OCI-LY7 (cell line): ENCODE measurements at regions of chr5 and their contacts with region 1.

Region 1: DNA sequence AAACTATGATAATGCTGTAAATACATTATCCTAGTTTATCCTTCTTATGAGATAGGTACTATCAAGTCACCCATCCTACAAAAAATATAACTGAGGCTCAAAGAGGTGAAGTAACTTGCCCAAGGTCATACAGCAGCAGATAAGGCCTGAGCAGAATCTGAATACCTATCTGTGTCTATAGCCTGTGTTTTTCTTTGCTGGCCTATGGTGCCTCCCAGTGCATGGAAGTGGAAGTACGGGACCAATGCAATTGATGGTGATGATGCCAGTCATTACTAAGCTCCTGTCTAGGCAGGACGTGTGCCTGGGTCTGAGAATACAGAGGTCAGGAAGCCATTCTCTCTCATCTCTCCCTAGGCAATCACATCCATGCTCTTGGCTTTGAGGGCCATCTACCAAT is 67.8 kb downstream of the FAT2 start:
- DNase-seq: peak; percentile 45
- H3K4me3 ChIP-seq: no peak overlapping the region
- H3K27ac ChIP-seq: no peak overlapping the region
- H3K4me1 ChIP-seq: no peaks in the 10 kb centered on the region
- CTCF ChIP-seq: peak; percentile 79

Region 2: DNA sequence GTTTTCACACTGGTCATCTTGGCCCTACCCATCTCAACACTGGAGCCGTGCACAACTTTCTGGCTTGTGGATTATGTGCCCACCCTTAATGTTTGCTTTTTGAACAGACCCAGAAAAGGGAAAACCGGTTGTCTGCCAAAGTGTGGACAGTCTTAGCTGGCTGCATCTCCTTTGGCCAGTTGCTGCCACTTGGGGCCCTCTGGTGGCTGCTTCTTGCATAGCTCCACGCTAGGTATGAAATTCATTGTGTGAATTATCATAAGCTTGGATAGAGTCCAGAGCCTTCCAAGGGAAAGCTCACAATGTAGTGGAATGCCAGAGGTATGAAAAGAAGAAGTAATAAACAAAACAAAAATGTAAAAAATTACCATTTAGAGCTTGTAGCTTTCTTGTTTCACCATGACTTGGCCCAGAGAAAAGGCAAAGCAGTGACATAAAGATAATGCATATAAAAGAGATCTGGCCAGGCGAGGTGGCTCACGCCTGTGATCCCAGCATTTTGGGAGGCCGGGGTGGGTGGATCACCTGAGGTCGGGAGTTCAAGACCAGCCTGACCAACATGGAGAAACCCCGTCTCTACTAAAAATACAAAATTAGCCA is 207.2 kb before region 1 on chr5:
- CTCF ChIA-PET with region 1: no interaction called
- POLR2A ChIA-PET with region 1: no interaction called
- intact Hi-C with region 1: loop called (anchors 5 kb)
- DNase-seq: peak; percentile 72
- H3K4me3 ChIP-seq: no peak overlapping the region
- H3K27ac ChIP-seq: no peak overlapping the region
- H3K4me1 ChIP-seq: peaks cover 6% of the 10 kb centered on the region
- CTCF ChIP-seq: peak; percentile 98

Region 3: DNA sequence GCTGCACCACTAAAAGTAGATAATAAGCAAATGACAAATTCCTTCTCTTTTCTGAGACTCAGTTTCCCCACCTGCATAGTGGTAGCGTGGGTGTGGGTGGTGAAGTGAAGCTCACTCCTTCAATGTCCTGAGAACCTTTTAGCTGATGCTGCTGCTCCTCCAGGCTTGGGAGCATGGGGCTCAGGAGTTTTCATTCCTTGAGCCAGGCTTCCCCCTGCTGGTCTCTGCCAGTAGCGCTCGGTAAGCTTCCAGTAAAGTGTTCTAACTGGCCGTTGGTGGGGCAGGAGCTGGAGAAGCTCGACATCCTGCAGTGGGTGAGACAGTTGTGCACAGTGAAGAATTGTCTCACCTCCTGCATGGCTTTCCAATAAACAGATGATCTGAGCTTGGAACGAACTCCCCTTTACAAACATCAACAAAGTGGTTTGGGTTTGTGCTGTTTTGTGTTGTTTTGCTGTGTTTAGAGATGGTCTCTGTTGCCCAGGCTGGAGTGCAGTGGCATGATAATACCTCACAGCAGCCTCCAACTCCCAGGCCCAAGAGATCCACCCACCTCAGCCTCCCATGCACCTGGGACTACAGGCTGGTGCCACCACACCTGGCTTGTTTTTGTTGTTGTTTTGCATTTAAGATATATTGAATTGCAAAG is 128.8 kb after region 1 on chr5:
- CTCF ChIA-PET with region 1: interaction called, 4 read pairs
- POLR2A ChIA-PET with region 1: no interaction called
- intact Hi-C with region 1: loop called (anchors 2 kb)
- DNase-seq: peak; percentile 73
- H3K4me3 ChIP-seq: no peak overlapping the region
- H3K27ac ChIP-seq: no peak overlapping the region
- H3K4me1 ChIP-seq: no peaks in the 10 kb centered on the region
- CTCF ChIP-seq: peak; percentile 87

Region 4: GRCh38 chr5:151740336-151740942 is 217.1 kb after region 1 on chr5:
- CTCF ChIA-PET with region 1: no interaction called
- POLR2A ChIA-PET with region 1: no interaction called
- intact Hi-C with region 1: loop called (anchors 5 kb)
- DNase-seq: peak; percentile 70
- H3K4me3 ChIP-seq: no peak overlapping the region
- H3K27ac ChIP-seq: no peak overlapping the region
- H3K4me1 ChIP-seq: no peaks in the 10 kb centered on the region
- CTCF ChIP-seq: peak; percentile 96